Heart right ventricle (tissue), 16 donors: ENCODE measurements at regions of chr5 and their contacts with region 1.

Region 1: GRCh38 chr5:174735498-174736330 is 11.3 kb downstream of the MSX2 start:
- DNase-seq: no peak
- ATAC-seq: no peak
- H3K4me3 ChIP-seq: peak overlapping the region in 1 of 10 donors; percentile 10
- H3K27ac ChIP-seq: no peak overlapping the region
- H3K4me1 ChIP-seq: peaks cover 0 to 19% (median 7%) of the 10 kb centered on the region in 9 donors
- H3K27me3 ChIP-seq: peaks cover 20 to 97% (median 79%) of the 10 kb centered on the region in 7 donors
- CTCF ChIP-seq: peak in 5 of 9 donors; percentile 26 to 47 (median 30)

Region 2: DNA sequence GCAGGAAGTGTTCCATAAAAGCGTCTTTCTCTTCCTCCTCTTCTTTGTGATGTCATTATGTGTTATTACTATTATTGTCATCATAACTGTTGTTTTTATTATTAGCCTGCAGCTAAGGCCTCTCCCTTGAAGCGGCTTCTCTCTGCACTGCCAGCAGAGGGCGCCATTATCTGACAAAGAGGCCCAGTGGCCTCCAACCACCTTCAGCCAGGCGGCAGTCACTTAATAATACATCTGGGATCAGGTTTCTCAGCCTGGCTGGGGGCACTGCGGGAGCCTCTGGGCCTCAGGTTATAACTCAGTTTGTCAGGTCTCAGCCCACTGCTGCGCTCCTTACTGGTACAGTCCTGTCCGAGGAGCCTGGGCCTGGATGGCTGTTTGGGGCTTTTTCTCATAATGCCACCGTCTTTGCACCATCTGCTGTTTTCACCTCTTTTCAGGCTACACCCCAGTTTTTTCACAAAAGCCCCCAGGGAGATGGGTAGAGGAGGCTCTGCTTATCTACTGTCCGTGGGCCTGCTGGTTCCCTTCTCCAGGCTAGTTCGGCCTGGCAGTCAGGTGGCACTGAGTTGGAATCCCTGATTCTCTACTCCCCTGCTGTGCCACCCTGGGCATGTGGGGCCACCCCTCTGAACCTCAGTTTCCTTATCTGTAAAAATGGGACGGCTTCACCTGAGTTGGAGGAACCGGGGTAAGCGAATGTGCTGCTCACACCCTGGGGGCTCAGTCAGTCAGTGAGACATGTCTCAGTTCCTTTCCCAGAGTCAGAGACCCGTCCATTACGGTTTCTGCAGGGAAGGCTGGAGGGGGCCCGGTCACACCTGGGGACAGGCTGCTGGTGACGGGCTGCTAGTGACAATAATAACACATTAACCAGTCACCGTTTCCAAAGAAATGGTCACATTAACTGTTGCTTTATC is 408.1 kb before region 1 on chr5:
- intact Hi-C with region 1: loop called in 1 of 10 experiments (anchors 5 kb)
- DNase-seq: peak; percentile 42 to 63
- ATAC-seq: peak in 7 of 8 donors; percentile 20 to 70 (median 57)
- H3K4me3 ChIP-seq: no peak overlapping the region
- H3K27ac ChIP-seq: no peak overlapping the region
- H3K4me1 ChIP-seq: no peaks in the 10 kb centered on the region
- H3K27me3 ChIP-seq: peaks cover 0 to 65% (median 17%) of the 10 kb centered on the region in 7 donors
- CTCF ChIP-seq: peak in 8 of 9 donors; percentile 46 to 74 (median 69)

Region 3: GRCh38 chr5:174424219-174425053 is 311.3 kb before region 1 on chr5:
- intact Hi-C with region 1: loop called in 1 of 10 experiments (anchors 10 kb)
- DNase-seq: no peak
- ATAC-seq: no peak
- H3K4me3 ChIP-seq: no peak overlapping the region
- H3K27ac ChIP-seq: no peak overlapping the region
- H3K4me1 ChIP-seq: peaks cover 0 to 6% (median under 1%) of the 10 kb centered on the region in 9 donors
- H3K27me3 ChIP-seq: peaks cover 0 to 33% (median 13%) of the 10 kb centered on the region in 7 donors
- CTCF ChIP-seq: no peak

Region 4: DNA sequence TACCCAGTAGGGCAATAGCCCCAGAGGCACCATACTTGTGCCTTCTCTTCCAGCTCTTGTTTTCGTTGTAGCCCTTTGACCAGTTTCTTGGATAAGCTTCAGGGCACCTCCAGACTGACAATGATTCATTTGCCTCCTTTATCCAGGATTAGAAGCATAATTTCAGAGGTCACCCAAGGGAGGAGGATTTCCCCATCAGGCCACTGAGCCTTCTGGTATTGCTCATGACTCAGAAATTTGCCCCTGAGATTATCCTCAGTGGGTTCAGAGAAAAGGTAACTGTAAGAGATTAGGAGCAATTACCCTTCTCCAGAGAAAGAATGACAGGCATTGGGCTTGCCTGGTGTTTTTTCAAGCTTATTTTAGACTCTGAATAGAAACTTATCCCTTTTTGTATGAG is 136.6 kb after region 1 on chr5:
- intact Hi-C with region 1: no loop called
- DNase-seq: no peak
- ATAC-seq: no peak
- H3K4me3 ChIP-seq: no peak overlapping the region
- H3K27ac ChIP-seq: no peak overlapping the region
- H3K4me1 ChIP-seq: no peaks in the 10 kb centered on the region
- H3K27me3 ChIP-seq: peaks cover 0 to 36% (median 10%) of the 10 kb centered on the region in 7 donors
- CTCF ChIP-seq: no peak